ENCODE measurements at regions of chr22 and their contacts with region 1.

Region 1: DNA sequence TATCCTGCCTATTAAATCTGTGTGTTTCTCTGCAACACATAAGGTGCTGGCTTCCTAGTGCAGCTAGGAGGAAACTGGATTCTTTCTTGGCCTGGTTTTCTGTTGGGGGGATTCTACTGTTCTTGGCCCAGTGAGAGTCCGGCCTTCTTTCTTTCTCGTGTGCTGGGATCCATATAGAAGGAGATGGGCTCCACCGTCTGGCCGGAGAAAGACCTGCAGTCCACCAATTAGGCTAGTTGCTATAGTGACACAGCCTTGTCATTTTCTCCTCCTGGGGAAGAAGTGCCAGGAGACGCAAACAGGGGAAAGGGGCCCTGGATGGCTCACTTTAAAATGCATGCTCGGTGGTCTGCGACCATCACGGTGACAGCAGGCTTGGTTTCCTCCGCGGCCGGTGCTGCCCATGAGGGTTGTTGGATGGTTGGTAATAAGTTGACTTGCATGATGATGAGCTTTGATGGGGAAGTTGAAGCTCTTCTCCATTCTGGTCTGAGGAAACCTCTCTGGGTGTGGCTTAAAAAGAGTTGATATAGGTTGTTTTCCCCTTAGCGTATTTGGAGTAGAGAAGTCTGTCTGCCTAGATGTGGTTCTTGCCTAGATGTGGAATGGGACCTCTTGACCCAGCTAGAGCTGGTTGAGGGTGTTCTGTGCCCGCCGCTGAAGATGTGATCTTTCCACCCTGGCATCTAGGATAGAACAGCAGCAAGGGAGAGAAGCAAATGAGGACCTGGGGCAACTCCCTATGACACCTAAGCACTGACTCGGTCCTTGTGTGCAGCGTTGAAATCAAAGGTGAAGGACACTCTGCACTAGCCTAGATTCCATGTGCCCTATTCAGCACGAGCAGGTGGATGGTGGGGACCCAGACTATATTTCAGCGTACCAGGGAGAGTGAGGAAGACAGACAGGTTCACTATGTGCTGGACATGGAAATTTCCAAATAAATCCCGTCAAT is 1335.0 kb downstream of the BRD1 start:
- DNase-seq: peak; percentile 89
- H3K4me3 ChIP-seq: no peak overlapping the region
- H3K27ac ChIP-seq: no peak overlapping the region
- H3K4me1 ChIP-seq: peaks cover 16% of the 10 kb centered on the region
- H3K27me3 ChIP-seq: no peaks in the 10 kb centered on the region
- CTCF ChIP-seq: peak; percentile 91

Region 2: DNA sequence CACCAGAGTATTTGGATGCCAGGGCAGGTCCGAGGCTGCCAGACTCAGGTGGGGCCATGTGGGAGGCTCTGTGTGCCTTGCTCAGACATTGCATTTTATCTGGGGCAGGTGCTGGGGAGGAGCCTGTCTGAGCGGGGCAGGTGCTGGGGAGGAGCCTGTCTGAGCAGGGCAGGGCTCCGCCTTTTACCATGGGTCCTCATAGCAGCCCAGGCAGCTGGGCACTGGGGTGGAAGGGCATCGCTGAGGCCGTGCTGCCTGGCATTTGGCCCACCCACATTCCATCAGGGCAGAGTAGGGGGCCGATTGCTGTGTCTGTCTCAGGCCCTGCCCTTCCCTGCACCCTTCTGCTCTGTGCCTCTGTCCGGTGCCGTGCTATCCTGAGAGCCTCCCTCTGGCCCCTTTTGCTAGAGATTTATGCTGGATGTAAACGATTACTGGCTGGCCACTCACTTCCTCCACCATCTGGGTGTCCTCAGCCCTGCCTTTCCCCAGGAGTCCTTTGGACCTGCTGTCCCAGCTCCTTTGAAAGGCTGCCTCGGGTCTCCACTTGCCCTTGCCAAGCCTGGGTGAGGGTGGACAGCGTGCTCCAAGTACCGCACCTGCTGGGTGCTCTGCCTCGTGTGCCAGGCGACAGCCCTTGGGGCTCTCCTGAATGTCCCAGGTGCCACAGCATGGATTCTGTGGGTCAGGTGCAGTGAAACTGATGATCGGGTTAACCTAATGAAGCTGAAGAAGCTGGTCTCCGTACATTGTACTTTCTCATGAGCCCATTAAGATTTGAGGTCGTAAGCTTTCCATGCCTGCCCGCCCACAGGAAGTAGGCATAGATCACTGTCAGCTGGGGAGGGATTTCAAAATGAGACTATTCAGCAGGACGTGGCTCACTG is 1448.6 kb before region 1 on chr22:
- CTCF ChIA-PET with region 1: interaction called, 11 read pairs
- POLR2A ChIA-PET with region 1: no interaction called
- intact Hi-C with region 1: no loop called
- DNase-seq: peak; percentile 83
- H3K4me3 ChIP-seq: no peak overlapping the region
- H3K27ac ChIP-seq: no peak overlapping the region
- H3K4me1 ChIP-seq: peaks cover 16% of the 10 kb centered on the region
- H3K27me3 ChIP-seq: no peaks in the 10 kb centered on the region
- CTCF ChIP-seq: no peak

Region 3: GRCh38 chr22:47218671-47219070 is 1274.0 kb before region 1 on chr22:
- CTCF ChIA-PET with region 1: no interaction called
- POLR2A ChIA-PET with region 1: no interaction called
- intact Hi-C with region 1: loop called (anchors 5 kb)
- DNase-seq: no peak
- H3K4me3 ChIP-seq: no peak overlapping the region
- H3K27ac ChIP-seq: no peak overlapping the region
- H3K4me1 ChIP-seq: no peaks in the 10 kb centered on the region
- H3K27me3 ChIP-seq: peaks cover 7% of the 10 kb centered on the region
- CTCF ChIP-seq: no peak

Region 4: DNA sequence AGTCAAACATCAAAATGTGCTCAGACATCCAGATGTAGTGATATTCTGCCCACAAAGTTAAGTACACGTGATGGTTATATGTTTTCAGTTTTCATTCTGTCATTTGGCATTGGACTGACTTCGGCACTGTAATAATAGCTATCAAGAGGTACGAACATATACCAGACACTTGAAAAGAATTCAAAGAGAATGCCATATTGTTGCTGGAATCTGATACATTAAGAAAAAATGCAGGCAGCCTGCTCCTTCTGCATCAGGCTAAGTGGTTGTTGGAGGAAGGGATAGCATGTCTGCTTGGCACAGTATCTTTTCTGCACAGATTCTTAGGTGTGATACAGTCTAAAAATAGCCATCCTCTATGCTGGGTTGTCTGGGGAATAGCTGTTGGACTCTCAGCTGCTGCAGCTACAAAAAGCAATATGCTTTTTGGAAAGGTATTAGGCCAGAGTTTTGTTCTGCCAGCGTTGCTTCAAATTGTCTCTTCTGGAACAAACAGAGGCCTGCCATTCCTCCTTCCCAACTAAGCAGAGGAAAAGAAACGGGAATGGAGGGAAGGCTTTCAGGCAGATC is 837.6 kb before region 1 on chr22:
- CTCF ChIA-PET with region 1: interaction called, 10 read pairs
- POLR2A ChIA-PET with region 1: no interaction called
- intact Hi-C with region 1: no loop called
- DNase-seq: no peak
- H3K4me3 ChIP-seq: no peak overlapping the region
- H3K27ac ChIP-seq: no peak overlapping the region
- H3K4me1 ChIP-seq: no peaks in the 10 kb centered on the region
- H3K27me3 ChIP-seq: no peaks in the 10 kb centered on the region
- CTCF ChIP-seq: no peak

Region 5: DNA sequence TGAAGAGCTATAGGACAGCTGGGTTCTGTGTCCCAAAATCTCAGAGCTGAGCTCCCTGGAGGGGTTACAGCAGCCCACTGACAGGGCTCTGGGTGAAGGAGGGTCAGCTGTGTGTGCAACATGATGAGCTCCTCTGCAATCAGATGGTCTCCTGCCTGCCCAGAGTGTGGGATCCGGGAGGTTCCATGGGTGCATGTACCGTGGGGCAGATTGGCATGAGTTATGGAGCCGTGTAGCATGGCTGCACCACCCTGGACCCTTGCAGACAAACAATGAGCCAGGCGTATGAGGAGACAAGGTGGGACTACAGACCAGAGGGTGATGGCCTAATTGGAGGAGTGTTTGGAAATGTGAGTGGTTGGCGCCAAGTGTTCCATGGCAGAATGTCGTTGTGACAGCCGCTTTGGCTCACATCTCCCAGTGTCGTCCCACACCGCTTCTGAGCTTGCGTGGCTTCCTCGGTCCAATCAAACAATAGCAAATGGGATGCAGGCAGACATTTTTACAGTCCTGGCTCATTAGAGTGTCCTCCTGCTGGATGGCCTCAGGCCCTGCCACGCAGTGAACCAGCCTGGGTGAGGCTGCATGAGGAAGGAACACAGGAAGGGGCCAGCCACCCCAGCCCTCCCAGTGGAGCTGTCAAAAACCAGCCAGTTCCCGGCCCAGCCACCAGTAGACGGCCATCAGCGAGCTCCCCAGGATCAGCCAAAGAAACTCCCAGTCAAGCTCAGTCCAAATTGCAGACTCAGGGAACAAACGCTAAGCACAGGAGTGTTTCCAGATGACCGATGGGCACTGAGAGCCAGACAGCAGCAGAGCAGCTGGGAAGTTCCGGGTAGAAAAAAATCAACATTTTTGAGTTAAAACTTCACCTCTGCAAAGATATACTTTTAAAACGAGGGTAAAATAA is 268.1 kb after region 1 on chr22:
- CTCF ChIA-PET with region 1: no interaction called
- POLR2A ChIA-PET with region 1: no interaction called
- intact Hi-C with region 1: no loop called
- DNase-seq: no peak
- H3K4me3 ChIP-seq: no peak overlapping the region
- H3K27ac ChIP-seq: no peak overlapping the region
- H3K4me1 ChIP-seq: no peaks in the 10 kb centered on the region
- H3K27me3 ChIP-seq: no peaks in the 10 kb centered on the region
- CTCF ChIP-seq: no peak

Region 6: GRCh38 chr22:49970528-49971231 is 1478.0 kb after region 1 on chr22:
- CTCF ChIA-PET with region 1: no interaction called
- POLR2A ChIA-PET with region 1: no interaction called
- intact Hi-C with region 1: no loop called
- DNase-seq: peak; percentile 99
- H3K4me3 ChIP-seq: peak overlapping the region; percentile 56
- H3K27ac ChIP-seq: peak overlapping the region; percentile 89
- H3K4me1 ChIP-seq: peaks cover 11% of the 10 kb centered on the region
- H3K27me3 ChIP-seq: no peaks in the 10 kb centered on the region
- CTCF ChIP-seq: no peak

Measured in A673 (cell line).